ENCODE measurements at regions of chr2 and their contacts with region 1.

Region 1: GRCh38 chr2:217118559-217119284 is 258.9 kb upstream of the TNP1 start:
- DNase-seq: no peak
- H3K4me3 ChIP-seq: no peak overlapping the region
- CTCF ChIP-seq: no peak

Region 2: GRCh38 chr2:217105733-217106649 is 12.7 kb before region 1 on chr2:
- CTCF ChIA-PET with region 1: interaction called, 10 read pairs
- POLR2A ChIA-PET with region 1: no interaction called
- DNase-seq: peak; percentile 97
- H3K4me3 ChIP-seq: no peak overlapping the region
- CTCF ChIP-seq: no peak